Activated CD4-positive, alpha-beta memory T cell treated with anti-CD3 and anti-CD28 coated beads for 36 hours (primary cell): ENCODE measurements at regions of chr13 and their contacts with region 1.

Region 1: DNA sequence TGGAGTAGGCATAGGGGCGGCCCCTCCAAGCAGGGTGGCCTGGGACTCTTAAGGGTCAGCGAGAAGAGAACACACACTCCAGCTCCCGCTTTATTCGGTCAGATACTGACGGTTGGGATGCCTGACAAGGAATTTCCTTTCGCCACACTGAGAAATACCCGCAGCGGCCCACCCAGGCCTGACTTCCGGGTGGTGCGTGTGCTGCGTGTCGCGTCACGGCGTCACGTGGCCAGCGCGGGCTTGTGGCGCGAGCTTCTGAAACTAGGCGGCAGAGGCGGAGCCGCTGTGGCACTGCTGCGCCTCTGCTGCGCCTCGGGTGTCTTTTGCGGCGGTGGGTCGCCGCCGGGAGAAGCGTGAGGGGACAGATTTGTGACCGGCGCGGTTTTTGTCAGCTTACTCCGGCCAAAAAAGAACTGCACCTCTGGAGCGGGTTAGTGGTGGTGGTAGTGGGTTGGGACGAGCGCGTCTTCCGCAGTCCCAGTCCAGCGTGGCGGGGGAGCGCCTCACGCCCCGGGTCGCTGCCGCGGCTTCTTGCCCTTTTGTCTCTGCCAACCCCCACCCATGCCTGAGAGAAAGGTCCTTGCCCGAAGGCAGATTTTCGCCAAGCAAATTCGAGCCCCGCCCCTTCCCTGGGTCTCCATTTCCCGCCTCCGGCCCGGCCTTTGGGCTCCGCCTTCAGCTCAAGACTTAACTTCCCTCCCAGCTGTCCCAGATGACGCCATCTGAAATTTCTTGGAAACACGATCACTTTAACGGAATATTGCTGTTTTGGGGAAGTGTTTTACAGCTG is at the starts of genes BRCA2 and ZAR1L:
- DNase-seq: peak; percentile 93
- H3K4me3 Mint-ChIP-seq: peak within 1 kb of the TSS; percentile 95
- H3K27ac Mint-ChIP-seq: peak within 1 kb of the TSS; percentile 99
- H3K4me1 Mint-ChIP-seq: peaks cover 13% of the 10 kb centered on the region
- H3K27me3 Mint-ChIP-seq: no peaks in the 10 kb centered on the region
- total RNA-seq, gene BRCA2: 22.1 to 23.1 TPM
- total RNA-seq, gene ZAR1L: not detected

Region 2: DNA sequence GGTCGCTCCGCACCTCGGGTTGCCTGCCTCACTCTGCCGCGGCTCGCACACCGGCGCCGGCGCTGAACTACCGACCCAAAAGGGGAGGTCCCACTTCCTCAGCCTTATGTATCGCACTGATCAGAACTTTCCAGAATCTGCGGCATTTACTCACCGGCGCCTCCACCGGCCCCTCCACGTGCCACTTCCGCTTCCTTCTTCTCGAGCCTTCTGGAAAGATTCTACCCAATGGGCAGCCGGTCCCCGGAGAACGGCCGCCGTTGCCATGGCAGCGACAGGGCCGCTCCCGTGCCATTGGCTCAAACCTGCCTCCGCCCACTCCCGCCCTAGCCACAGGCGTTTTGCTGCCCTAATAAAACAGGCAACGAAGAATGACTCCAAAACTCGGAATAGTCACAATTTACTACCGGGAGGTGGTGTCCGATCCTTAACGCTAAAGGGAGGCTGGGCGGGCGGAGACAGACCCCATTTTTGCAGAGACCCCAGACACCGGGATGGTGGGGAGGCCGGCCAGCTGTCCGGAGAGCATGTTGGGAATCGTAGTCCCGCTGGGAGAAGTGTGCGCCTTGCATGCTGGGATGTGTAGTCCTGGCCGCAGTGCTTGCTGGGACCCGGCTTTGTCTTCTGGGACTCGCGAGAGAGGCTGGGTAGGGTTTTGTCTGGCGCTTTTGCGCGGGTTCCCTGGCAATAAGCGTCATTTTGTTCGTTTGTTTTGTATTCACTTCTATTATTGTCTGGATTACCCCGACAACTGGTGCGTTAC is 1153.4 kb before region 1 on chr13 and contains the start of gene HSPH1:
- CTCF ChIA-PET with region 1: no interaction called
- POLR2A ChIA-PET with region 1: no interaction called
- intact Hi-C with region 1: loop called (anchors 1 kb)
- DNase-seq: peak; percentile 99
- H3K4me3 Mint-ChIP-seq: peak within 1 kb of the TSS; percentile 92
- H3K27ac Mint-ChIP-seq: peak within 1 kb of the TSS; percentile 99
- H3K4me1 Mint-ChIP-seq: peaks cover 35% of the 10 kb centered on the region
- H3K27me3 Mint-ChIP-seq: no peaks in the 10 kb centered on the region
- total RNA-seq, gene HSPH1: 214 to 221 TPM

Region 3: GRCh38 chr13:32216286-32216685 is 99.1 kb before region 1 on chr13:
- CTCF ChIA-PET with region 1: no interaction called
- POLR2A ChIA-PET with region 1: no interaction called
- intact Hi-C with region 1: no loop called
- DNase-seq: no peak
- H3K4me3 Mint-ChIP-seq: no peak overlapping the region
- H3K27ac Mint-ChIP-seq: no peak overlapping the region
- H3K4me1 Mint-ChIP-seq: no peaks in the 10 kb centered on the region
- H3K27me3 Mint-ChIP-seq: no peaks in the 10 kb centered on the region

Region 4: GRCh38 chr13:32234932-32235331 is 80.5 kb before region 1 on chr13:
- CTCF ChIA-PET with region 1: no interaction called
- POLR2A ChIA-PET with region 1: no interaction called
- intact Hi-C with region 1: no loop called
- DNase-seq: no peak
- H3K4me3 Mint-ChIP-seq: no peak overlapping the region
- H3K27ac Mint-ChIP-seq: no peak overlapping the region
- H3K4me1 Mint-ChIP-seq: peaks cover 5% of the 10 kb centered on the region
- H3K27me3 Mint-ChIP-seq: no peaks in the 10 kb centered on the region

Region 5: GRCh38 chr13:32246468-32246867 is 69.0 kb before region 1 on chr13:
- CTCF ChIA-PET with region 1: interaction called, 11 read pairs
- POLR2A ChIA-PET with region 1: no interaction called
- intact Hi-C with region 1: loop called (anchors 1 kb)
- DNase-seq: peak; percentile 61
- H3K4me3 Mint-ChIP-seq: no peak overlapping the region
- H3K27ac Mint-ChIP-seq: no peak overlapping the region
- H3K4me1 Mint-ChIP-seq: no peaks in the 10 kb centered on the region
- H3K27me3 Mint-ChIP-seq: no peaks in the 10 kb centered on the region

Region 6: GRCh38 chr13:32297206-32297605 is 18.2 kb before region 1 on chr13:
- CTCF ChIA-PET with region 1: interaction called, 4 read pairs
- POLR2A ChIA-PET with region 1: interaction called, 11 read pairs
- intact Hi-C with region 1: loop called (anchors 1 kb)
- DNase-seq: no peak
- H3K4me3 Mint-ChIP-seq: no peak overlapping the region
- H3K27ac Mint-ChIP-seq: no peak overlapping the region
- H3K4me1 Mint-ChIP-seq: peaks cover 20% of the 10 kb centered on the region
- H3K27me3 Mint-ChIP-seq: peaks cover 7% of the 10 kb centered on the region

Region 7: DNA sequence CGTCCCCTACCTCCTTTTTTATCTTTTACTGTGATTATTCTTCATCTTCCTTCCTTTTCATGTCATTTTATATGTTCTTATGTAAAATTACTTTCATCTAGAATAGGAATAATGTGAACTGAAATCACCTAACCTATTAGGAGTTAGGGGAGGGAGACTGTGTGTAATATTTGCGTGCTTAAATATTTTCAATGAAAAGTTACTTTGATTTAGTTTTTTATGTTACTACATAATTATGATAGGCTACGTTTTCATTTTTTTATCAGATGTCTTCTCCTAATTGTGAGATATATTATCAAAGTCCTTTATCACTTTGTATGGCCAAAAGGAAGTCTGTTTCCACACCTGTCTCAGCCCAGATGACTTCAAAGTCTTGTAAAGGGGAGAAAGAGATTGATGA is 82.5 kb after region 1 on chr13:
- CTCF ChIA-PET with region 1: no interaction called
- POLR2A ChIA-PET with region 1: no interaction called
- intact Hi-C with region 1: no loop called
- DNase-seq: no peak
- H3K4me3 Mint-ChIP-seq: no peak overlapping the region
- H3K27ac Mint-ChIP-seq: no peak overlapping the region
- H3K4me1 Mint-ChIP-seq: peaks cover 4% of the 10 kb centered on the region
- H3K27me3 Mint-ChIP-seq: no peaks in the 10 kb centered on the region

Region 8: GRCh38 chr13:32427852-32428580 is 112.6 kb after region 1 on chr13 and contains the start of gene N4BP2L1:
- CTCF ChIA-PET with region 1: no interaction called
- POLR2A ChIA-PET with region 1: interaction called, 38 read pairs
- intact Hi-C with region 1: loop called (anchors 1 kb)
- DNase-seq: peak; percentile 94
- H3K4me3 Mint-ChIP-seq: peak within 1 kb of the TSS; percentile 88
- H3K27ac Mint-ChIP-seq: peak within 1 kb of the TSS; percentile 96
- H3K4me1 Mint-ChIP-seq: peaks cover 38% of the 10 kb centered on the region
- H3K27me3 Mint-ChIP-seq: no peaks in the 10 kb centered on the region
- total RNA-seq, gene N4BP2L1: 22.1 to 24.0 TPM